ENCODE measurements at regions of chr5 and their contacts with region 1.

Region 1: GRCh38 chr5:131382407-131383395 is 118.8 kb downstream of the CDC42SE2 start:
- DNase-seq: peak; percentile 59
- H3K4me3 Mint-ChIP-seq: peak overlapping the region; percentile 53
- H3K27ac Mint-ChIP-seq: peak overlapping the region; percentile 94
- H3K4me1 Mint-ChIP-seq: peaks cover 90% of the 10 kb centered on the region
- H3K27me3 Mint-ChIP-seq: no peaks in the 10 kb centered on the region

Region 2: DNA sequence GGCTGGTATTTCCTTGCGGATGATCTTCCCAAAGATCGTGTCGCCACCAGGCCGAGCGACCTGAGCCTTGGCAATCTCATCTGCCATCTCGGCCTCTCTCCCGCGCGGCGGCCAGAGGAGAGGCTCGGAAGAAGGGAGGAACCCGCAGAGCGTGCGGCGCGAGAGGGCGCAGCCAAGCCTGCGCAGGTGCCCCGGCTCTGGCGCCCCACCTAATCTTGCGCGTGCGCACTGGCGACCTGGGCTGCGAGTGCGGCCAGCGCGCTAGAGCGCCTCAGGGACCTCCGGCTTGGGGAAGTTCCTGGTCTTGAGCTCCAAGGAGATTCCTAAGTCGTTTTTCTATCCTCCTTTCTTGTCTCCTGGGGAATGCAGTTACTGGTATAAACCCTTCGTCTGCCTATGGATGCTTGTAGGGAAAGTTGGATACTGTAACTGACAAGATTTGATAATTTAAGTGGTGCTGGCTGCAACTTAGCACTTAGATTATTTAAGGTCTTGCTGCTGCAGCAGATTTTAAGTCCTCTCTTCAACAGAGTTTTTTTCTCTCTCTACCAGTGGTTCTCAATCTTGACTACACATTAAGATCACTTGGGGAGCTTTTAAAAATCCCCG is 217.5 kb before region 1 on chr5 and contains the start of gene HINT1:
- CTCF ChIA-PET with region 1: interaction called, 8 read pairs
- POLR2A ChIA-PET with region 1: interaction called, 16 read pairs
- DNase-seq: peak; percentile 94
- H3K4me3 Mint-ChIP-seq: peak within 1 kb of the TSS; percentile 93
- H3K27ac Mint-ChIP-seq: peak within 1 kb of the TSS; percentile 97
- H3K4me1 Mint-ChIP-seq: peaks cover 59% of the 10 kb centered on the region
- H3K27me3 Mint-ChIP-seq: no peaks in the 10 kb centered on the region
- total RNA-seq, gene HINT1: 323 to 329 TPM

Region 3: GRCh38 chr5:131258733-131259132 is 124.0 kb before region 1 on chr5:
- CTCF ChIA-PET with region 1: interaction called, 88 read pairs
- POLR2A ChIA-PET with region 1: interaction called, 234 read pairs
- DNase-seq: no peak
- H3K4me3 Mint-ChIP-seq: peak overlapping the region; percentile 67
- H3K27ac Mint-ChIP-seq: peak overlapping the region; percentile 96
- H3K4me1 Mint-ChIP-seq: peaks cover 75% of the 10 kb centered on the region
- H3K27me3 Mint-ChIP-seq: no peaks in the 10 kb centered on the region

Region 4: DNA sequence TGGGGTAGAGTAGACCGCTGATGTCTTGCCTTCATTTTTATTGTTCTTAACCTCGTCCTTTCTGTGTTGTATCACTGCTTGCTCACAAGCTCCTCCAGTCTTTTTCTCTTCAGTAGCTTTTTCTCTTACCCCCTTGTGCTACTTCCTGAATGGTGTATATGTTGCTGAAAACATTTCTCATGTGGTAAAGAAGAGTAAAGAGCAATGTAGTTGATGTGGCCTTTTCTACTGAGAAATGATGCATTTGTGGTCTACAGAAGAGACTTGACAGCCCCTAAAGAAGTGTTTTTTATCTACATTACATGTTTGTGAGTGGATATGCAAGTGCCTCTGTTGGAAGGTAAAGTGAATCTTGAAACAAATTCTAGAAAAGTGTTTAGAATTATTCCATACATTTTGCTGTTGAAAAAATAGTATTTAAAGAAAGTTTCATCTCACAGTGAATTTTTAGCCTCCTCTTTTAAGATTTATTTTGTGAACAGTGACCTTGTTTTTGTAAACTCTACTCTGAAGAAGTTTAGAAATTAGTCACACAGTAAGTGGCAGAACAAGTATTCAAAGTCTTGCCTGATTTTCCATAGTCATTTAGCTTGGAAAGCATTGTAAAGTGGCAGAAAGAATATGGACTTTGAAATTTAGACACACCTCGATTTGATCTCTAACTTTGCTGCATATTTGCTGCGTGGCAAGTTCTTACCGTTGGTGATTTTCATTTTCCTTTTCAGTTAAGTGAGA is 101.4 kb before region 1 on chr5:
- CTCF ChIA-PET with region 1: interaction called, 13 read pairs
- POLR2A ChIA-PET with region 1: interaction called, 83 read pairs
- DNase-seq: no peak
- H3K4me3 Mint-ChIP-seq: peak overlapping the region; percentile 61
- H3K27ac Mint-ChIP-seq: peak overlapping the region; percentile 87
- H3K4me1 Mint-ChIP-seq: peaks cover 90% of the 10 kb centered on the region
- H3K27me3 Mint-ChIP-seq: no peaks in the 10 kb centered on the region

Region 5: DNA sequence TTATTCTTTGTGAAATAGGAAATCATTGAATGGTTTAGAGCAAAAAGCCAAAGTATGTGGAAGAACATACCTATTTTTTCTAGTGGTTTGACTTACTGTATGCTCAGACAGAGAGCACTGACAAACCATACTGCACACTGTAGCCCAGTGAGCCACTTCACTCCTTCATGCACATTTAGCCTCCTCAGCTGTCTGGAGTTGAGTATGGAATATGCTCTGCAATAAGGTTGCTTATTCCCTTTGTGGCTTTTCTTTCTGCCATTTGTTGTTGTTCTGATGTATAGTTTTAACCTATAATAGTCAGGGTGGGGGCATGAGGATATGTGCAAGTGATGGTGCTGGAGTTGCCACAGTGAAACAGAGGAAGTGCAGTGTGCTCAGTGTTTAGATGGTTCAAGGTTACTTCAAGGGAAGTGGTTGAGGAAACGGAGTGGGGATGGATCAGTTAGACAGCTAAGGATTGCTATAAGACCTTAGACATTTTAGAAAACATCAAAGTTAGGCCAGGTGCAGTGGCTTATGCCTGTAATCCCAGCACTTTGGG is 18.1 kb before region 1 on chr5:
- CTCF ChIA-PET with region 1: interaction called, 10 read pairs
- POLR2A ChIA-PET with region 1: interaction called, 15 read pairs
- DNase-seq: peak; percentile 41
- H3K4me3 Mint-ChIP-seq: peak overlapping the region; percentile 1
- H3K27ac Mint-ChIP-seq: peak overlapping the region; percentile 74
- H3K4me1 Mint-ChIP-seq: peaks cover 70% of the 10 kb centered on the region
- H3K27me3 Mint-ChIP-seq: no peaks in the 10 kb centered on the region

Region 6: DNA sequence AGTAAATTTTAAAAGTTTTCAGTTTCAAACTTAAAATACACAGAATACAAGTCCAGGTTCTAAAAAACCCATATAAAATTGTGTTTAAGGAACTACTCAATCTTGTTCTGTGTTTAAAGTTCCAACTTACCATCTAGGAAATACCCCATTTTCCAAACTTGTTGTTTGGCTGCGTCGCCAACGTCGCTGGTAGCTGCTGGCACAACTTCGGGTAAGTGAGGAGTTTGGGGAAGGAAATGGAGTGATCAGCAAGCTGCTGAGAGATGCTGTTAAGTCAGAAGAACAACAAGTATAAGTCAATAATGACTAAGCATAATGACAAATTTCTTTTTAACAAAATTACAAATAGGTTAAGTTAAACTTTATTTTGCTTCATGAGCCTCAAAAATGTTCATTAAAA is 323.6 kb after region 1 on chr5:
- CTCF ChIA-PET with region 1: no interaction called
- POLR2A ChIA-PET with region 1: no interaction called
- DNase-seq: no peak
- H3K4me3 Mint-ChIP-seq: no peak overlapping the region
- H3K27ac Mint-ChIP-seq: no peak overlapping the region
- H3K4me1 Mint-ChIP-seq: no peaks in the 10 kb centered on the region
- H3K27me3 Mint-ChIP-seq: no peaks in the 10 kb centered on the region